ENCODE measurements at regions of chr3 and their contacts with region 1.

Region 1: DNA sequence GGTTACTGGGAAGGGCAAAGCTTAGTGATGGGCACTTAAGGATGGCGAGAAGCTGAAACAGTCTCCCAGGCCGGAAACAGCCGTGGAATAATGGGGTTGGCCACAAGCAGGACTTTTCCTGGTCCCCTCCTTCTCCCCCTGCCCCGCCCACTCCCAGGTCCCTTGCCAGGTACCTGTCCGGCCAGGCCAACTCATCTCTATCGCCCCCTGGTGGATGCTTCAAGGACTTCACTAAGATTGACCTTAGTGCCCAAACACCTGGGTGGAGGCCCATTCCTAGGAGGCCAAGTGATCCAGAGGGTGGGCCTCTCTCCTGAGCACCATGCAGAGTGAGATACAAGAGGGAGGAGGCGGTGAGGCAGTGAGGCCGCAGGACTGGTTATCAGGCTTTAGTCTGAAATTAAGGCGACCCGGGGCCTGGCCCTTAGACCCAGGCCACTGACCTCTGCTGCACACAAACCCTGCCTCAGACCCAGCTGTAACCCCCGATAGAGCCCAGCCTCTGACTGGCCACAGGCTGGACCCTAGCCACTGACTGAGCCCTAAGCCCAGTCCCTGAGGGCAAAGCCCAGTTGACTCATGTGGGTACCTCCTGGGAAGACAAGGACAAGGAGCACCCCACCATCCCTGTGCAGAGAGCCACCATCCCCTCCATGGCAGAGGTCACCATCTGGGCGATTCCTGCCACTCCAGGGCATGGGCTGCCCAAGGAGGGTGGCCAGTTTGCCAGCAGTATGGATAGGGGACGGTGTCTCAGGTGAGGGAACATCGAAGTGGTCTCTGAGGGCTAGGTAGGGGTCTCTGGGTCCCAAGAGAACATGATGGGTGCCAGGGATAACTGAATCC is 37.6 kb downstream of the VIPR1 start:
- DNase-seq: peak; percentile 90
- H3K4me3 Mint-ChIP-seq: no peak overlapping the region
- H3K27ac Mint-ChIP-seq: no peak overlapping the region
- H3K4me1 Mint-ChIP-seq: peaks cover 2% of the 10 kb centered on the region
- H3K27me3 Mint-ChIP-seq: no peaks in the 10 kb centered on the region

Region 2: GRCh38 chr3:42502429-42503250 is 37.5 kb before region 1 on chr3 and contains the start of gene VIPR1:
- intact Hi-C with region 1: loop called (anchors 1 kb)
- DNase-seq: peak; percentile 96
- H3K4me3 Mint-ChIP-seq: peak within 1 kb of the TSS; percentile 93
- H3K27ac Mint-ChIP-seq: peak within 1 kb of the TSS; percentile 14
- H3K4me1 Mint-ChIP-seq: peaks cover 24% of the 10 kb centered on the region
- H3K27me3 Mint-ChIP-seq: peaks cover 52% of the 10 kb centered on the region
- total RNA-seq, gene VIPR1: 0.68 and 0.80 TPM in 2 replicates

Region 3: DNA sequence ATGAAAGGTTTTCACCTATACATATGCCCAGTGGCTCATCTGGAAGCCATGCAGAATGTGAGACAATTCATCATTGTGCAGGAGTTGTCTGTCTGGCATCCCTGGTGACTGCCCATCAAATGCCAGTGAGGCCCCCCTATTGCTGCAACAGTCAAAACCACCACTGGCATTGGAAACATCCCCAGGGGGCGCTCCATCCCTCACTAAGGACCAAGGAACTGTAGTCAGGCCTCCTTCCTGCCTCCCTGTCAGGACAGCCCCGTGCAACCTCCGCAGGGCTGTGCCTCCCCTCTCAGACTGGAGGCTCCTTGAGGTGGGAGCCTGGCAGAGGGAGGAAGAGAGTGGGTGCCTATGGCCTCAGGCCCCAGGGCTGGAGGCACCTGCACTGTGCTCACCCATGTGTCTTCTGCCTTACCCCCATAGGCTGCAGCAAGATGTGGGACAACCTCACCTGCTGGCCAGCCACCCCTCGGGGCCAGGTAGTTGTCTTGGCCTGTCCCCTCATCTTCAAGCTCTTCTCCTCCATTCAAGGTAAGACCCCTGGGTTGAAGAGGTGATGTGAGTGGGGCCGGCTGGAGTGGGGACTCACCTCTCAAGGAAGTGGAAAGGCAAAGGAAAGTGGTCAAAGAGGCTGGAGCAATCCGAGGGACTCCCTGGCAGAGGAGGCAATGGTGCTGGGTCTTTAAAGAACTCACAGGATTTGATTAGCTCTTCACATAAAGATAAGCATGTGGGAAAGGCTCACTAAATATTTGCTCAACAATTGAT is 21.1 kb before region 1 on chr3:
- intact Hi-C with region 1: loop called (anchors 2 kb)
- DNase-seq: peak; percentile 82
- H3K4me3 Mint-ChIP-seq: no peak overlapping the region
- H3K27ac Mint-ChIP-seq: peak overlapping the region; percentile 29
- H3K4me1 Mint-ChIP-seq: peaks cover 20% of the 10 kb centered on the region
- H3K27me3 Mint-ChIP-seq: no peaks in the 10 kb centered on the region